ENCODE measurements at regions of chr10 and their contacts with region 1.

Region 1: DNA sequence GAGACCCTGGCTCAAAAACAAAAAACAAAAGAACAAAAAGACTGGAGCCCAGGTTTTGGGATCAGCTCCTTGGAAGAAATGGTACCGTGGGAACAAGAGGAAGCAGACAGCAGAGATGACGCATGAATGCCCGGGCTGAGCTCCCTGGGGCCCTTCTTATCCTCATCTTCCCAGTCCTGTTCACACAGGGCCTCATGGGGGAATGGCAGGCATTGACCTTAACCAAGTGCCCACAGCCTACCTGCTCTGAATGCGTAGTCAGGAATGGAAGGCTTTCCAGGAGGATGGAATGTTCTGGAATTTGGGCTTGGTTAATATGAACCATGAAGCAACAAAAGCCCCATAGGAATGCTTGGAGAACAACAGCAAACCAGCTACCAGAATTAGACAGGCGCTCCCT is 154.7 kb downstream of the PRPF18 start:
- DNase-seq: no peak
- H3K4me3 ChIP-seq: no peak overlapping the region
- H3K27ac ChIP-seq: no peak overlapping the region
- H3K4me1 ChIP-seq: no peaks in the 10 kb centered on the region
- H3K27me3 ChIP-seq: no peaks in the 10 kb centered on the region
- CTCF ChIP-seq: no peak
- POLR2A ChIP-seq: no peak

Region 2: GRCh38 chr10:13693783-13694700 is 47.4 kb before region 1 on chr10:
- intact Hi-C with region 1: loop called (anchors 2 kb)
- DNase-seq: no peak
- H3K4me3 ChIP-seq: no peak overlapping the region
- H3K27ac ChIP-seq: no peak overlapping the region
- H3K4me1 ChIP-seq: no peaks in the 10 kb centered on the region
- H3K27me3 ChIP-seq: no peaks in the 10 kb centered on the region
- CTCF ChIP-seq: no peak
- POLR2A ChIP-seq: no peak

Region 3: GRCh38 chr10:13847201-13847631 is 105.8 kb after region 1 on chr10:
- intact Hi-C with region 1: no loop called
- DNase-seq: no peak
- H3K4me3 ChIP-seq: no peak overlapping the region
- H3K27ac ChIP-seq: no peak overlapping the region
- H3K4me1 ChIP-seq: no peaks in the 10 kb centered on the region
- H3K27me3 ChIP-seq: no peaks in the 10 kb centered on the region
- CTCF ChIP-seq: no peak
- POLR2A ChIP-seq: no peak

Region 4: DNA sequence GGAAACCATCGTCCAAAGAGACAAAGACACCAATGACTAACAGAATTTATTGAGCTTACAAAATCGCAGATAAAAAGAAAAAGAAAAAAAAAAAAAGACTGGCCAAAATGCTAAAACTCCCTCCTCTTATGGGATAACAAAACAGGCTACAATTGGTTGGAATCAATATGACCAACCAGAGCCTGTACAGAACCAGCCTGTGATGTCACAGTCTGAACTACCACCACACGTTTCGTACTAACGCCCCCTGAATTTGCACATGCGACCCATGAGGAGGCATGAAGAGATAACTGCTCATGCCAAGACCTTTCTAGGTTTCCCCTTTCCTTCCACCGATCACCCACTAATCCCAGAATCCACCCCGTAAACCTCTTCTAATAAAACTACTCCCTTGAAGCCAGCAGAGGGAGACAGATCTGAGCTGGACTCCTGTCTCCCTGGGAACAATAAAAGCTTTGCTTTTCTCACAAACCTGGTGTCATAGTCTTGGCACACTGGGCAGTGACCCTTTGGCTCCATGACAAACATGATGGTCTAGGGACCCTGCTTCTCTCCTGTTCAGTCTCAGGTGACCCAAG is 444.7 kb after region 1 on chr10:
- intact Hi-C with region 1: no loop called
- DNase-seq: no peak
- H3K4me3 ChIP-seq: no peak overlapping the region
- H3K27ac ChIP-seq: no peak overlapping the region
- H3K4me1 ChIP-seq: no peaks in the 10 kb centered on the region
- H3K27me3 ChIP-seq: peaks cover 0 to 5% of the 10 kb centered on the region in 2 donors
- CTCF ChIP-seq: no peak
- POLR2A ChIP-seq: no peak